Activated CD8-positive, alpha-beta memory T cell treated with anti-CD3 and anti-CD28 coated beads, Interleukin-2, amount 10 ng/mL, durations not matched to agents 7 days and 5 days (primary cell): ENCODE measurements at regions of chr17 and their contacts with region 1.

Region 1: GRCh38 chr17:29116804-29117772 is 63.1 kb downstream of the MYO18A start:
- DNase-seq: peak; percentile 84
- ATAC-seq: peak; percentile 80
- H3K4me3 Mint-ChIP-seq: no peak overlapping the region
- H3K27ac Mint-ChIP-seq: no peak overlapping the region
- H3K4me1 Mint-ChIP-seq: peaks cover 11% of the 10 kb centered on the region
- H3K27me3 Mint-ChIP-seq: no peaks in the 10 kb centered on the region

Region 2: DNA sequence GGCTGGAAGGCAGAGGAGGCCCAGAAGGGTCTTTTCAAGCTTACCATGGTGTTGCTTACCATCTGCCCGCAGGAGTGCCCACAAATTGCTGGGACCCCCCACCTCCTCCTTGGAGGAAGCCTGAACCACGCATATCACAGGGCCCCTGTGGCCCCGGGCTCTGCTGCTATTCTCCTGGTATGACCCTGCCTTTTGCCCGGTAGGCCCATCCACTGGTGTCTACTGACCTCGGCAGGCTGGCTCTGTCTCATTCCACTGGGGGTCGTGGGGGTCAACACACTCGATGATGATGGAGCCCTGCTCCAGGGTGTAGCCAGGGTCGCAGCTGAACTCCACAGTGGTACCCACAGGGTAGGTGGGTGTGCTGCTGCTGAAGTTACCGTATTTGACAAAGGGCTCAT is 157.6 kb before region 1 on chr17:
- CTCF ChIA-PET with region 1: interaction called, 337 read pairs
- DNase-seq: no peak
- ATAC-seq: no peak
- H3K4me3 Mint-ChIP-seq: no peak overlapping the region
- H3K27ac Mint-ChIP-seq: no peak overlapping the region
- H3K4me1 Mint-ChIP-seq: no peaks in the 10 kb centered on the region
- H3K27me3 Mint-ChIP-seq: peaks cover 12% of the 10 kb centered on the region

Region 3: GRCh38 chr17:28982131-28982951 is 134.7 kb before region 1 on chr17:
- CTCF ChIA-PET with region 1: interaction called, 11 read pairs
- DNase-seq: peak; percentile 84
- ATAC-seq: peak; percentile 93
- H3K4me3 Mint-ChIP-seq: no peak overlapping the region
- H3K27ac Mint-ChIP-seq: peak overlapping the region; percentile 89
- H3K4me1 Mint-ChIP-seq: peaks cover 21% of the 10 kb centered on the region
- H3K27me3 Mint-ChIP-seq: no peaks in the 10 kb centered on the region

Region 4: DNA sequence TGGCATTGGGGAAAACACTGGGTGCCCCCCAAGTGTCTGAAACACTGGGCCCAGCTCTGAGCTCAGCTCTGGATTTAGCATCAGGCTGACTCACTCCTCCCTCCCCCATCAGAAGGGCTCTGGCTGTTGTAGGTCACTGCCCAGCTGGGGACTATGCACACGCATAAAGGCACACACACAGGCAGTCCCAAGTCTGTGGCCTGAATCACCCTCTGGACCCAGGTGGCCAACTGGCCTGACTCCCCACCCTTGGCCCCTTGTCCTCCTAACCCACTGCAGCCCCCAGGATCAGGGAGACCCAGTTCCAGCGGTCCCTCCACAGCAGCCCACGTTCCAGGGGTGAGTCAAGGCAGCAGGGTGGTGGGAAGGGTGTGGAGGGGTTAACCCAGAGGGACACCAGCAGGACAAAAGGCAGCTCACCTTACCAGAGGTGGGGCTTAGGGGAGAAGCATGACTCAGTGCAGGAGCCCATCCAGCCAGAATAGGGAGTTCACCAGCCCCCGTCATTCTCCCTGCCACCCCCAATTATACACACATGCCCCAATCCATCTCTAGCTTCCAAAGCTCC is 16.1 kb after region 1 on chr17:
- CTCF ChIA-PET with region 1: interaction called, 557 read pairs
- DNase-seq: no peak
- ATAC-seq: no peak
- H3K4me3 Mint-ChIP-seq: no peak overlapping the region
- H3K27ac Mint-ChIP-seq: no peak overlapping the region
- H3K4me1 Mint-ChIP-seq: peaks cover 56% of the 10 kb centered on the region
- H3K27me3 Mint-ChIP-seq: no peaks in the 10 kb centered on the region

Region 5: DNA sequence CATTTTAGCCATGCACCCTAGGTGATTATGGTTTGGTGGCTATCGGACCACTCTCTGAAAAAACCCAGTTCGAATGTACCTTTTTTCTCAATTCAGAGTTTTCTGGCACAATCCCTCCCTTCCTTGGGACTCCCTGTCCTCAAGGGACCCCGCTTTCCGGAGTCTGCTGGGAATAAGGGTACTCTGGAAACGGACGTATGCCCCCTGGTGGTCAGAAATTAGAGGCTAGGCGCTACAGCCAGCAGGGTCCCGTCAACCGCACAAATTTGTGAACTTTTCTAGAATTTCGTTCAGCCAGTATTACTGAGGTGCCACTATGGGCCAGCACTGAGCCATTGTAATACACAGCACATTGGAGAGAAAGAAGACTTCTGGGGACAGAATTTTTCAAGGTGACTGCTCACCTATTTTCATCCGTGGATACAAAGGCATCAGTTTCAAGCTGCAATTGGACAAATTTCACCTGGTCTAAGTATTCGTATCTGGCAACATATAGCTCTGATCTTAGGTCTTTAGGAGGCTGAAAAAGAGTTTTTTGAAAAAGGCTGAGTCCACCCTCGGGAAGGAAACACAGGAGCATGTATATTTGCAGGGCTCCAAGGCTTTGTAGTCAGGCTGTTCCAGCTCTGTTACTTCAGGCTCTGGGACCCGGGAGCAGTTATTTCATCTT is 102.4 kb after region 1 on chr17:
- CTCF ChIA-PET with region 1: interaction called, 14 read pairs
- DNase-seq: peak; percentile 80
- ATAC-seq: peak; percentile 92
- H3K4me3 Mint-ChIP-seq: no peak overlapping the region
- H3K27ac Mint-ChIP-seq: no peak overlapping the region
- H3K4me1 Mint-ChIP-seq: peaks cover 9% of the 10 kb centered on the region
- H3K27me3 Mint-ChIP-seq: peaks cover 3% of the 10 kb centered on the region